ENCODE measurements at regions of chr1 and their contacts with region 1.

Region 1: GRCh38 chr1:38873027-38873969 is at the start of gene MYCBP:
- DNase-seq: peak; percentile 95
- ATAC-seq: peak; percentile 98
- H3K4me3 ChIP-seq: peak within 1 kb of the TSS; percentile 93
- H3K27ac ChIP-seq: no peak within 1 kb of the TSS
- H3K4me1 ChIP-seq: peaks cover 14% of the 10 kb centered on the region; the same call in 1 of the 2 replicates
- H3K27me3 ChIP-seq: no peaks in the 10 kb centered on the region
- CTCF ChIP-seq: no peak
- total RNA-seq, gene MYCBP: 16.8 and 20.3 TPM in 2 replicates

Region 2: GRCh38 chr1:38763121-38763520 is 110.2 kb before region 1 on chr1:
- CTCF ChIA-PET with region 1: no interaction called
- POLR2A ChIA-PET with region 1: no interaction called
- intact Hi-C with region 1: no loop called
- DNase-seq: no peak
- ATAC-seq: no peak
- H3K4me3 ChIP-seq: no peak overlapping the region
- H3K27ac ChIP-seq: no peak overlapping the region
- H3K4me1 ChIP-seq: no peaks in the 10 kb centered on the region
- H3K27me3 ChIP-seq: peaks cover 69% of the 10 kb centered on the region
- CTCF ChIP-seq: no peak

Region 3: DNA sequence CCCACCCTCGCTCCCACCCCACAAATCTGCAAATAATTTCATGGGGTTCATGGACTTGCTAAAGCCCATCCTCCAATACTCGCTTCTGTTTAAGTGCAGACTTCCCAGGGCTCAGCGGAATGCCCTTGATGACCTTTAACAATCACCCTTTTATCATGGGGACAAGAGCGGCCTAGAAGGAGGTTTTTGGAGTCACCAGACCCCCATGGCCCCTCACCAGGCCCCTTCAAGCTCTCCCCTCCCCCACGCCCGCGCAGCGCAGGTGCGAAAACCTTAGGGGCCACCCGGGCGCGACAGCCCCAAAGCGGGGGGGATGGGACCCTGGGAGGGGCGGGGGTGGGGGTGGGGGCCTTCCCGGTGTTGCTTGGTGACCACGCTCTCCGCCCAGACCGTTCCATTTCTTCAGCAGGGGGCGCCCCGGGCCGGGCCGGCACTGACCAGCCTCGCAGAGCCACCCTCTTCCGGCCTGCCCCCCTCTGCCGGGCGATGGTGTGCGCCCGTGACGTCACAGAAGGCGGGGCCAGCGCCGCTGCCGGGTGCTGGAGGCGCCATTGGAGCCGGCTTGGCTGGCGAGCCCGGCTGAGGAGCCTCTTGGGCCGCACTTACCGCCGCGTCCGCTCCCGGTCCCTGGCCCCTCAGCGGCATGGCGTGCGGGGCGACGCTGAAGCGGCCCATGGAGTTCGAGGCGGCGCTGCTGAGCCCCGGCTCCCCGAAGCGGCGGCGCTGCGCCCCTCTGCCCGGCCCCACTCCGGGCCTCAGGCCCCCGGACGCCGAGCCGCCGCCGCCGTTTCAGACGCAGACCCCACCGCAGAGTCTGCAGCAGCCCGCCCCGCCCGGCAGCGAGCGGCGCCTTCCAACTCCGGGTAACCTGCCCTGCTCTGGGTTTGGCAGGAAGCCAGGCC is 117.7 kb after region 1 on chr1 and contains the start of gene AKIRIN1:
- CTCF ChIA-PET with region 1: no interaction called
- POLR2A ChIA-PET with region 1: no interaction called
- intact Hi-C with region 1: loop called (anchors 2 kb)
- DNase-seq: peak; percentile 97
- ATAC-seq: peak; percentile 77
- H3K4me3 ChIP-seq: peak within 1 kb of the TSS; percentile 91
- H3K27ac ChIP-seq: peak within 1 kb of the TSS; percentile 46
- H3K4me1 ChIP-seq: peaks cover 39% of the 10 kb centered on the region
- H3K27me3 ChIP-seq: no peaks in the 10 kb centered on the region
- CTCF ChIP-seq: no peak
- total RNA-seq, gene AKIRIN1: 58.6 and 77.3 TPM in 2 replicates

Region 4: DNA sequence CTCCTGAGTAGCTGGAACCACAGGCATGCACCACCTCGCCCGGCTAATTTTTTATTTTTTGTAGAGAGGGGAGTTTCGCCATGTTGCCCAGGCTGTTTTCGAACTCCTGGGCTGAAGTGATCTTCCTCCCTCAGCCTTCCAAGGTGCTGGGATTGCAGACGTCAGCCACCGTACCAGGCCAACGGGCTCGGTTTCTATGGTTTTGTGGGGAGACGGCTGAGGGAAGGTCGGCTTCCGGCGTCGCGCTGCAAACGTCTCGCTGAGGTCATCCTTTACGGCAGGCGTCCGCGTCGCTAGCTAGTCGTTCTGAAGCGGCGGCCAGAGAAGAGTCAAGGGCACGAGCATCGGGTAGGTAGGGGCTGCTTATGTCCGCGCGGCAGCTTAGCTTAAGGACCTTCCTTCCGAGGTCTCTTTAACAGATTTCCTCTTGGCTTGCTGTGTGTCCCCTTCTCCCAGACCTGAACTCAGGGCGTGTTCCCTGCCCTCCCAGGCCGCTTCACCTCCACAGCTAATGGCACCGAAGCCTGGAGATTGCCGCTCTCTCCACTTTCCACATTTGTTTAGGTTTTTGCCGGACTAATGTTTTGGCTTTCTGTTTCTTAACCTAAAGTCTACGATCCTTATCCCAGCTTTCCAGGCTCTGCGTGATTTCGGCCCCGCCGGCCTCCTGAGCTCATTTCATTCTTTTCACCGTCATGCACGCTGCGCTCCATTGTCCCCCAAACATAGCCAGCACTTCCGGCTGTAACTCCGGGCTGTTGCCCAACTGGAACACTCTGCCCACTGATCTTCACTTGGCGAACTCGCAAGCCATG is 153.0 kb after region 1 on chr1 and contains the start of gene NDUFS5:
- CTCF ChIA-PET with region 1: interaction called, 3 read pairs
- POLR2A ChIA-PET with region 1: no interaction called
- intact Hi-C with region 1: loop called (anchors 1 kb)
- DNase-seq: peak; percentile 88
- ATAC-seq: peak; percentile 90
- H3K4me3 ChIP-seq: peak within 1 kb of the TSS; percentile 94
- H3K27ac ChIP-seq: peak within 1 kb of the TSS; percentile 81
- H3K4me1 ChIP-seq: 0 out of 2 replicates have a peak, but pooled peaks cover 9% of the 10 kb centered on the region
- H3K27me3 ChIP-seq: no peaks in the 10 kb centered on the region
- CTCF ChIP-seq: no peak
- total RNA-seq, gene NDUFS5: 760 and 864 TPM in 2 replicates

Region 5: GRCh38 chr1:39091845-39092645 is 218.7 kb after region 1 on chr1:
- CTCF ChIA-PET with region 1: no interaction called
- POLR2A ChIA-PET with region 1: no interaction called
- intact Hi-C with region 1: loop called (anchors 5 kb)
- DNase-seq: peak; percentile 64
- ATAC-seq: peak; percentile 76
- H3K4me3 ChIP-seq: no peak overlapping the region
- H3K27ac ChIP-seq: no peak overlapping the region
- H3K4me1 ChIP-seq: peaks cover 6% of the 10 kb centered on the region
- H3K27me3 ChIP-seq: no peaks in the 10 kb centered on the region
- CTCF ChIP-seq: peak; percentile 77